PC-9 (cell line): ENCODE measurements at regions of chr1 and their contacts with region 1.

Region 1: GRCh38 chr1:223837206-223837605 is 8.5 kb downstream of the TP53BP2 start:
- DNase-seq: no peak
- H3K4me3 ChIP-seq: no peak overlapping the region; the same call in 1 of the 2 replicates
- H3K27ac ChIP-seq: peak overlapping the region; percentile 55
- H3K4me1 ChIP-seq: peaks cover 79% of the 10 kb centered on the region
- H3K27me3 ChIP-seq: no peaks in the 10 kb centered on the region
- CTCF ChIP-seq: no peak

Region 2: GRCh38 chr1:224287714-224288113 is 450.5 kb after region 1 on chr1:
- CTCF ChIA-PET with region 1: no interaction called
- POLR2A ChIA-PET with region 1: no interaction called
- intact Hi-C with region 1: no loop called
- DNase-seq: no peak
- H3K4me3 ChIP-seq: no peak overlapping the region
- H3K27ac ChIP-seq: no peak overlapping the region
- H3K4me1 ChIP-seq: no peaks in the 10 kb centered on the region
- H3K27me3 ChIP-seq: no peaks in the 10 kb centered on the region
- CTCF ChIP-seq: no peak

Region 3: GRCh38 chr1:224482619-224483018 is 645.4 kb after region 1 on chr1:
- CTCF ChIA-PET with region 1: no interaction called
- POLR2A ChIA-PET with region 1: interaction called, 10 read pairs
- intact Hi-C with region 1: no loop called
- DNase-seq: peak in 1 of 2 experiments; percentile 46
- H3K4me3 ChIP-seq: no peak overlapping the region
- H3K27ac ChIP-seq: peak overlapping the region; percentile 55
- H3K4me1 ChIP-seq: peaks cover 22% of the 10 kb centered on the region
- H3K27me3 ChIP-seq: no peaks in the 10 kb centered on the region
- CTCF ChIP-seq: no peak